ENCODE measurements at regions of chr2 and their contacts with region 1.

Region 1: DNA sequence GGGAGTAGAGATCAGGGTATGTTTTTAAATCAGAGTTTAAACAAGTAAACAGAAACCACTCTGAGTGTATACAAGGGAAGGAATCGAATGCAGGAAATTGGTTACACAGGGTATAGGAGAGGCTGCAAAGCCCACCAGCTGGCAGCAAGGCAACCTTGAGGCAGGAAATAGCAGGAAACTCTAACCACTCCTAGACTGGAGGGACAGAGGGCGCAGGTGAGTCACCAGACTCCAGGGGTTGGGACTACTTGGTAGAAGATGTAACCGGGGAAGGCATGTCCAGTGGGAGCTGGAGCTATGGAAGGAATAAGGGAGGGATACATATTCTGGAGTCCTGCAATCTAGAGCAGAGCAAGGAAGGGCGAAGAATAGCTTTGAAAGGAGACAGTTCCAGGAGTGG is 152.3 kb downstream of the MEIS1 start:
- DNase-seq: peak; percentile 49
- H3K4me3 ChIP-seq: no peak overlapping the region
- H3K27ac ChIP-seq: no peak overlapping the region
- H3K4me1 ChIP-seq: peaks cover 20% of the 10 kb centered on the region
- H3K27me3 ChIP-seq: no peaks in the 10 kb centered on the region
- CTCF ChIP-seq: peak; percentile 39; the same call in 1 of the 2 replicates

Region 2: DNA sequence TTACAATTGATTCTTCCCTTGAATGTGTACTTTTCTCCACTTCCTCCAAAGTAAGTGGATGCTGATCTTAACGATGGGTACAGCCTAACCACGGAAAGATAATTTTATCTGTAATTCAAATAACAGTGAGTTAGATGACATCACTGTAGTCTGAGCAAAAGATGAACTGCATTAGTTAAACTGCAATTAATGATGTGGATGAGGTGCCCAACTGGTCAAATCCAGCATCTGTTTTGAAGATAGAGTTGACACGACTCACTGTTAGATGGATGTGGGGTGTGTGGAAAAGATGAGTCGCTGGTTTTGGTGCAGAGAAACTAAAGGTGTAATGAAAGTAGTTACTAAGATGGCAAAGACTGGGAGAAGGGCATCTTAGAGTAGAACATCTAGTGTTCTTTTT is 422.7 kb before region 1 on chr2:
- CTCF ChIA-PET with region 1: no interaction called
- POLR2A ChIA-PET with region 1: no interaction called
- intact Hi-C with region 1: no loop called
- DNase-seq: no peak
- H3K4me3 ChIP-seq: no peak overlapping the region
- H3K27ac ChIP-seq: no peak overlapping the region
- H3K4me1 ChIP-seq: no peaks in the 10 kb centered on the region
- H3K27me3 ChIP-seq: no peaks in the 10 kb centered on the region
- CTCF ChIP-seq: no peak

Region 3: DNA sequence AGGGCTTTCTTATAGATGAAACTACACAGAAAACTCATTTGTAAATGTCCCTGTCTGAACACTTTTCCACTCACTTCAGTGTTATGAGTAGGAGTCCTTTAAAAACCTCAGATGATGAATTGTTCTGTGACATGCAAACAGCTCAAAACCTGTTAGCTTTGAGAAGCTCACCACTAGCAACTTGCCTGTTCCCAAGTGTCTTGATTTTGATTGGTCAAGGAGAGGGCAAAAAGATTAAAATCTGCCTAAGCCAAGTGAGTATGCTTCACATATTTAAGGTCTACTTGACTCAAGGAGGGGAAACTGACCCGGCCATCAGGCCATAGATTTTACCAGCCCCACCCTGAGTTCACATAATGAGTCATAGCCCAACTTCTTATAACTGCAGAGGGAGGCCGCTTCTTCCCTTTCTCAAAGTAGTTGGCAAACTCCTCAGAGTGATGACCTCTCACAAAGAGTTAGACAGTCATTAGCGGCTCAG is 197.5 kb before region 1 on chr2:
- CTCF ChIA-PET with region 1: no interaction called
- POLR2A ChIA-PET with region 1: no interaction called
- intact Hi-C with region 1: no loop called
- DNase-seq: peak; percentile 4
- H3K4me3 ChIP-seq: no peak overlapping the region
- H3K27ac ChIP-seq: no peak overlapping the region
- H3K4me1 ChIP-seq: no peaks in the 10 kb centered on the region
- H3K27me3 ChIP-seq: no peaks in the 10 kb centered on the region
- CTCF ChIP-seq: no peak

Region 4: DNA sequence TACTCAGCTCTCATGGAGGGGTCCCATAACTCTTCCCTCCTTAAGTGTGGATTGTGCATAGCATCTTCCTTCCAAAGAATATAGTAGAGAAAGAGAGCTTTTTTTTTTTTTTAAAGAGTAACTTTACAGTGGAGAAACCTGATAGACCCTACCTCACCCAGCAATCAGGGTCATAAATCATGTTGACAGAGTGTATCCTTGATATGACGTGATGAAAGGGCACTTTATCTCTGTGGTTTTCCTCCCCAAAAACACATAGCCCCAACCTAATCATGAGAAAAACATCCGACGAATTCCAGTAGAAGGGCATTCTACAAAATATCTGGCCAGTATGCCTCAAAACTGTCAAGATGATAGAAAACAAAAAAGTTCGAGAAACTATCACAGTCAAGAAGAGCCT is 181.7 kb before region 1 on chr2:
- CTCF ChIA-PET with region 1: no interaction called
- POLR2A ChIA-PET with region 1: no interaction called
- intact Hi-C with region 1: no loop called
- DNase-seq: no peak
- H3K4me3 ChIP-seq: no peak overlapping the region
- H3K27ac ChIP-seq: no peak overlapping the region
- H3K4me1 ChIP-seq: no peaks in the 10 kb centered on the region
- H3K27me3 ChIP-seq: no peaks in the 10 kb centered on the region
- CTCF ChIP-seq: no peak

Region 5: DNA sequence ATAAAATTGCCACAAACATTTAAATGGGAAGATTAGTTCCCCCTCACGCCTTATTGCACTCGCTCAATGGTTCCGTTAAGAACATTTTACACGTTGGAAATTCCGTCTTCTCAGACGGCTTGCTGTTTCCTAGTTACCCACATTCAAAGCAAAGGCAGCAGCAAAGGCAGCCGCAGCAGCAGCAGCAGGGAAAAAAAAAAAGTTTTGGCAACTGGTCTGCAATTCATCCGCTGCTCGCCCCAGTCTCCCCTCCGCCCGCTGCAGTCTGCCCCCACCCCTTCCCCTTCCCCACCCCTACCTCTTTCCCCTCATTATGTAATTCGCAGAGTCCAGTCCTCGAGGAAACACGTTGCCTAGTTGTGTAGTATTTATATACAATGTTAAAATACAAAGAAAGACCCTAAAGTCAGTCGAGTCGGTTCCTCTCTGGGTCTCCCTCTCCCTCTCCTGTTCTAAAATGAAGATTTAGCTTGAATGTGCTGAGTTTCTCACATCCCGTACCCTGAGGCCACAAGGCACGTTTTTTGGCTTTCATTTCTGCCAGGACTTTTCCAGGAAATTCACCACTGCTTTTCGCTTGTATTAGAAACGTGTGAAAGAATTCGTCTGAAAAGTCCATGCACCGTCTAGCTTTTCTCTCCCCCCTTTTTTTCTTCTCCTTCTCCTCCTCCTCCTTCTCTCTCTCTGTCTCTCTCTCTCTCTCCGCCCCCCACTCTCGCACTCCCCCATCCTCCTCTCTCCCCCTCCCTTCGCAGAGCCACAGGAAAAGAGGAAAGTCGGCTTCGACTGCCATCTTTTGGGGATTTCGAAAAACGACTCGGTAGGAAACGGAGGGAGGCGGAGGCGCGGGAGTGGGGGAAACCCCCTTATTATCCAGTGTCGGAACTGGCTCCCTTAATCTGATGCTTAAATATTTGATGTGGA is 12.3 kb before region 1 on chr2:
- CTCF ChIA-PET with region 1: no interaction called
- POLR2A ChIA-PET with region 1: no interaction called
- intact Hi-C with region 1: no loop called
- DNase-seq: peak; percentile 97
- H3K4me3 ChIP-seq: peak overlapping the region; percentile 65
- H3K27ac ChIP-seq: peak overlapping the region; percentile 92
- H3K4me1 ChIP-seq: peaks cover 75% of the 10 kb centered on the region
- H3K27me3 ChIP-seq: no peaks in the 10 kb centered on the region
- CTCF ChIP-seq: peak; percentile 74

Region 6: GRCh38 chr2:67322353-67323001 is 735.3 kb after region 1 on chr2:
- CTCF ChIA-PET with region 1: no interaction called
- POLR2A ChIA-PET with region 1: no interaction called
- intact Hi-C with region 1: loop called (anchors 5 kb)
- DNase-seq: peak; percentile 76
- H3K4me3 ChIP-seq: no peak overlapping the region
- H3K27ac ChIP-seq: peak overlapping the region; percentile 34
- H3K4me1 ChIP-seq: peaks cover 49% of the 10 kb centered on the region
- H3K27me3 ChIP-seq: no peaks in the 10 kb centered on the region
- CTCF ChIP-seq: peak; percentile 67

Region 7: DNA sequence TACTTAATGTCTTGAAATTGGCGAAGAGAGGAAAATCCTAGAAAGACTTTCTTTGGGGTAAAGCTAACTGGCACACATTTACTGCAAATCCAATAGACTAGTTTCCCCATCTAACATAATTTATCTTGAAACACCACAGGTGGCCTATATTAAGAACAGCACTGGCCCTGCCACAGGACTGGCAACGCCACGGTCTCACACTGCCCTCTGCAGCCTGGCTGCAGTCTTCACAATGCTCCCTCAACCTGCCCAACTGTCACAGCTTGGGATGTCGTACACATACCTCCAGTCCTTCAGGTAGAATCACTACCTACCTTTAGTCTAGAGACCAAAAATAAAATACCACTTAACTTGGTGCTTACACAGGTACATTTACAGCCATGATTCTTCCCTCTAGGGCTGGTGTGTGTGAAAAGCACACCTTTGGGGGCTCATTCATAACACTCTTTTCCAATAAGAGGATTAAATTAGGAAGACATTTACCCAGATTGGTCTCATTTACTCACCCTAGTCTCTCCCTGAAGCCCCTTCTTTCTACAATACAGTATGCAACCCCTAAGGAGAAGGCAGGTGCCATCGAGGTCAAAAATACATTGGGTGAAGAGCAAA is 1253.3 kb after region 1 on chr2:
- CTCF ChIA-PET with region 1: no interaction called
- POLR2A ChIA-PET with region 1: no interaction called
- intact Hi-C with region 1: loop called (anchors 5 kb)
- DNase-seq: peak; percentile 88
- H3K4me3 ChIP-seq: no peak overlapping the region
- H3K27ac ChIP-seq: no peak overlapping the region
- H3K4me1 ChIP-seq: peaks cover 16% of the 10 kb centered on the region
- H3K27me3 ChIP-seq: no peaks in the 10 kb centered on the region
- CTCF ChIP-seq: peak; percentile 96